Activated T-helper 1 cell treated with anti-CD3 and anti-CD28 coated beads, Interleukin-12 subunit alpha, Interleukin-12 subunit beta, Interleukin-2, Interleukin-4 antibody, amounts not matched to agents 30 ng/mL and 10 ng/mL and 1 ng/mL, durations not matched to agents 14 hours and 24 hours and 36 hours (primary cell): ENCODE measurements at regions of chr6 and their contacts with region 1.

Region 1: GRCh38 chr6:28981833-28982475 is 23.2 kb downstream of the ZNF311 start:
- DNase-seq: peak; percentile 59
- H3K4me3 Mint-ChIP-seq: peak overlapping the region; percentile 90
- H3K27ac Mint-ChIP-seq: peak overlapping the region; percentile 95
- H3K4me1 Mint-ChIP-seq: peaks cover 59% of the 10 kb centered on the region
- H3K27me3 Mint-ChIP-seq: peaks cover 22% of the 10 kb centered on the region

Region 2: DNA sequence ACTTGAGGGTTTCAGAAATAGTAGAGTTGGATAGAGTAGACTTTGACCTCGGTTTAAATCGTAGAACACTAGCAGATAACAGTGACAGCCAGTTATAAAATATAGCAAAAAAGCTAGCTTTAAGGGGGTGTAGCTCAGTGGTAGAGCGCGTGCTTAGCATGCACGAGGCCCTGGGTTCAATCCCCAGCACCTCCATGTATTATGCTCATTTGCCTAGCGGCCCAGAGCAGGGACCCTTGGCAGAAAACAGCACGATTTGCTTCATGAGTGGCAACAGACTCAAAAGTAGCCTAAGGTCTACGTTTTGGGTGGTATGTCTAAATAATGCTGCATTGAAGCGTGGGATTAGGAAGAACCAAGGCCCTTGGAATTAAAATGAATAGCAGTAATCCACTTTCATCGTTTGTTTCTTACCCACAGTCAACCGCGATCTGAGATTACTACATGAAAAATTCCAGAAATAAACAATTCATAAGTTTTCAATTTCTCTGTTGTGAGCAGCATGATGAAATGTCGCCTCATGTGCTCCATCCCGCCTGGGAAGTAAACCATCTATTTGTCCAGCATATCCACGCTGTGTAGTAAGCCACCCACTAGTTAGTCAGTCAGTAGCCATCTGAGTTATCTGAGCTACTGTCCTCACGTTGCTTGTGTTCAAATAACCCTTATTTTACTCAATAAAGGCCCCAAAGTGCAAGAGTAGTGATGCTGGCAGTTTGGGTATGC is 271.3 kb before region 1 on chr6:
- intact Hi-C with region 1: no loop called
- DNase-seq: no peak
- H3K4me3 Mint-ChIP-seq: no peak overlapping the region
- H3K27ac Mint-ChIP-seq: no peak overlapping the region
- H3K4me1 Mint-ChIP-seq: peaks cover 15% of the 10 kb centered on the region
- H3K27me3 Mint-ChIP-seq: peaks cover 31% of the 10 kb centered on the region

Region 3: GRCh38 chr6:28895134-28895812 is 86.7 kb before region 1 on chr6:
- intact Hi-C with region 1: loop called (anchors 1 kb)
- DNase-seq: peak; percentile 89
- H3K4me3 Mint-ChIP-seq: peak overlapping the region; percentile 90
- H3K27ac Mint-ChIP-seq: peak overlapping the region; percentile 100
- H3K4me1 Mint-ChIP-seq: peaks cover 25% of the 10 kb centered on the region
- H3K27me3 Mint-ChIP-seq: peaks cover 6% of the 10 kb centered on the region

Region 4: GRCh38 chr6:28923318-28924102 is 58.4 kb before region 1 on chr6 and contains the start of gene TRIM27:
- intact Hi-C with region 1: loop called (anchors 1 kb)
- DNase-seq: peak; percentile 80
- H3K4me3 Mint-ChIP-seq: peak within 1 kb of the TSS; percentile 93
- H3K27ac Mint-ChIP-seq: peak within 1 kb of the TSS; percentile 91
- H3K4me1 Mint-ChIP-seq: peaks cover 33% of the 10 kb centered on the region
- H3K27me3 Mint-ChIP-seq: no peaks in the 10 kb centered on the region
- total RNA-seq, gene TRIM27: 67.2 and 67.4 TPM in 2 replicates

Region 5: GRCh38 chr6:28953039-28953584 is 28.8 kb before region 1 on chr6:
- intact Hi-C with region 1: loop called (anchors 1 kb)
- DNase-seq: peak; percentile 28
- H3K4me3 Mint-ChIP-seq: peak overlapping the region; percentile 81
- H3K27ac Mint-ChIP-seq: peak overlapping the region; percentile 74
- H3K4me1 Mint-ChIP-seq: peaks cover 30% of the 10 kb centered on the region
- H3K27me3 Mint-ChIP-seq: peaks cover 14% of the 10 kb centered on the region

Region 6: DNA sequence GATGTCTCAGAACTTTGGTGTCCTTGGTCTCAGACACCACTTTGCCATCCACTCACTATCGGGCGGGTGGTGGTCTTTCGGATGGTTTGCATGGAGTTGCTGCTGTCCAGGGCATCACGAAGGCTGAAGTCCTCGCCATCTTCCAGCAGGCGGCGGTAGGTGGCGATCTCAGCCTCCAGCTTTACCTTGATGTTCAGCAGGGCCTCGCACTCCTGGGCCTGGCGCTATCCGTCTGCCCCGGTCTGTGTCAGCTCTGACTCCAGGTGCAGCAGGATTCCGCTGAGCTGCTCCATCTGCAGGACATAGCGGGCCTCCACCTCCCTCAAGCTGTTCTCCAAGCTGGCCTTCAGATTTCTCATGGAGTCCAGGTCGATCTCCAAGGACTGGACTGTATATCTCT is 12.8 kb before region 1 on chr6:
- intact Hi-C with region 1: no loop called
- DNase-seq: no peak
- H3K4me3 Mint-ChIP-seq: no peak overlapping the region
- H3K27ac Mint-ChIP-seq: no peak overlapping the region
- H3K4me1 Mint-ChIP-seq: no peaks in the 10 kb centered on the region
- H3K27me3 Mint-ChIP-seq: peaks cover 20% of the 10 kb centered on the region

Region 7: DNA sequence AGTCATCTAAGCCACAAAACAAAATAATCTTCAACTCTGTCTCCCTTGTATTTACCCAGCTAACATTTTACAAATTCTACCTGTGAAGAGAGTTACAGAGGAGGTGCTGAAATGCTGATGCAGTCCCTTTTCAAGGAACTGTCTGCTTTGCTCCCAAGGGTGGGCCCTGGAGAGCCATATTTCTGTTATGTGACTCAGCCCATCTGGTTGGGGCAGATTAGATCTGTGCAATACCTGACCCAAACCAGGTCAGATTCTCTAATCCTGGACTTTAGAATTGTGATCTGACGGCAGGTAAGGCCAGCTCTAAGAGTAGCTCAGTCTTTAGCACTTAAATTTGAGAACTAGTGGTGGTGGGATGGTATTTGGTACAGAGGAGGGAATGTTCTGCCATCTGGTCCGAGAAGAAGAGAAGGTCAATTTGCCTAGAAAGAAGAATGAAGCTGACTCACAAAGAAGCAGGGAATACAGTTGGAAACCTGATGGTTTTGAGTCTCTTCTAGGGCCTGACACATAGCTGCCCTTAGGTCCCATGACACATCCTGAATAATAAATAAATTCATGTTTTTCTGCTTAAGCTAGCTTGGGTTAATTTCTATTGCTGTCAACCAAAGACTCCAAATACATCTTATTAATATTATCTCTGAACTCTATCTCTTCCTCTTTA is 15.0 kb after region 1 on chr6:
- intact Hi-C with region 1: no loop called
- DNase-seq: no peak
- H3K4me3 Mint-ChIP-seq: no peak overlapping the region
- H3K27ac Mint-ChIP-seq: no peak overlapping the region
- H3K4me1 Mint-ChIP-seq: no peaks in the 10 kb centered on the region
- H3K27me3 Mint-ChIP-seq: peaks cover 13% of the 10 kb centered on the region